Caco-2 (cell line): ENCODE measurements at regions of chr17 and their contacts with region 1.

Region 1: DNA sequence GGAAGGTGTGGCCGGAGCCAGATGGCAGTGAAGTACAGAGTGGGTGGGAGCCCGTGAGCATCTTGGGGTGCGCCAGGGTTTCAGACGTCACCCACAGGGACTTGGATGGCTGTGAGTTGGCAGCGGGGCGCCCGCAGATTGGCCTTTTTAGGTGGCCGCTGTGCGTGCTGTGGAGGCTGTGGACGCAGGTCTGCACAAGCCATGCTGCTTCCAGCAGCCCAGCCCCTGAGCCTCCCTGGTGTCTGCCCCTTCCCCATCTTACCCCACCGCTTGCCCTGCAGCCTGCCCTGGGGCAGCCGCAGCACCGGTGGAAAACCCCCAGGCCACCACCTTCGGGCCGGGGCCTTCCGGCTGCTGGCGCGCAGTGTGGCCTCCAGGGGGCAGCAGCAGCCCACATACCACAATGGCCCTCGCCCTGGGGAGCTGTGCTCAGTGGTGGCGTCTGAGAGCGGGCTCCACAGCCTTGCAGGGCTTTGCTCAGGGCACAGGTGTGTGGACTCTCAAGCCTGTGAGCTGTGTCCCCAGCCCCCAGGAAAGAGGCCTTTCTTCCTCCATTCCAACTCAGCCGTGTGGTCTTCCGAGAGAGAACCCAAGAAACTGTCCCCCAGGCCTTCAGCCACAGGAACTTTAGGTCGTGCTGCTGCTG is 11.8 kb downstream of the ENDOV start:
- DNase-seq: peak; percentile 80 to 91
- H3K4me3 ChIP-seq: no peak overlapping the region
- H3K4me3 Mint-ChIP-seq: no peak overlapping the region
- H3K27ac Mint-ChIP-seq: no peak overlapping the region
- H3K4me1 ChIP-seq: no peaks in the 10 kb centered on the region
- H3K4me1 Mint-ChIP-seq: no peaks in the 10 kb centered on the region
- H3K27me3 ChIP-seq: no peaks in the 10 kb centered on the region
- H3K27me3 Mint-ChIP-seq: peaks cover 6% of the 10 kb centered on the region
- CTCF ChIP-seq: peak; percentile 97 to 99

Region 2: GRCh38 chr17:80575057-80575875 is 148.5 kb after region 1 on chr17:
- CTCF ChIA-PET with region 1: interaction called, 5 read pairs
- POLR2A ChIA-PET with region 1: no interaction called
- intact Hi-C with region 1: loop called (anchors 1 kb)
- DNase-seq: peak; percentile 85 to 92
- H3K4me3 ChIP-seq: no peak overlapping the region
- H3K4me3 Mint-ChIP-seq: no peak overlapping the region
- H3K27ac Mint-ChIP-seq: no peak overlapping the region
- H3K4me1 ChIP-seq: no peaks in the 10 kb centered on the region
- H3K4me1 Mint-ChIP-seq: peaks cover 15% of the 10 kb centered on the region
- H3K27me3 ChIP-seq: no peaks in the 10 kb centered on the region
- H3K27me3 Mint-ChIP-seq: no peaks in the 10 kb centered on the region
- CTCF ChIP-seq: peak; percentile 99 to 100

Region 3: DNA sequence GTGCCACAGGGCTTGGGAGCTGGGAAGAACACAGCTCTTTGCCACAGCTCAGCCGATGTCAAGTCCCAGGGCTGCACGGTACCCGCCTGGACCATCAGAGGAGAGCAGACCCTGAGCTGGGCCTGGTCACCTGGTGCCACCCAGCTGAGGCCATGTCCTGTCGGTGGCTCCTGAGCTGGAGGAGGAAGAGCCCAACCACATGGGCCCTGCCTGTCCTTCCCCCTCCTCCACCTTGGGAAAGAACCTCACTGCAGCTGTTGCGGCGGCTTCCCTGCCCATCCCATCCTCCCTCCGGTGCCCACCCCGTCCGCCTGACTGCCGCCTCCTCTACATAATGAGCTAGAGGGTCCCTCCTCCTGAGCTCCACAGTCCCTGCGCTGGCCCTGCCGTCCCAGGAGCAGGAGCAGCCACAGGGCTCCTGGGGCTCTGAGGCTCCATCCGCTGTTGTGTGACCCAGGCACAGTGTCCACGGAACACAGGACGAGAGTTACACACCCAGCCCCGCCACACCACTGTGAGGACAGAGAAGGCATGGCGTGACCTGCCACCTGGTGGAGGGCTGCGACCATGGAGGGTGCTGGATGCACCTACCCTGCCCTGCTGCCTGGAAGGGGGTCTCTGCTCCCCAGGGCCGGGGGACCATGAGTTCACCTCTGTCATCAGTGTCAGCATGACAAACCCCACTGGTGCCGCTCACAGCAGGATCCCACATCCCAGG is 543.4 kb after region 1 on chr17:
- CTCF ChIA-PET with region 1: interaction called, 11 read pairs
- POLR2A ChIA-PET with region 1: no interaction called
- intact Hi-C with region 1: no loop called
- DNase-seq: peak; percentile 63 to 64
- H3K4me3 ChIP-seq: no peak overlapping the region
- H3K4me3 Mint-ChIP-seq: no peak overlapping the region
- H3K27ac Mint-ChIP-seq: no peak overlapping the region
- H3K4me1 ChIP-seq: no peaks in the 10 kb centered on the region
- H3K4me1 Mint-ChIP-seq: no peaks in the 10 kb centered on the region
- H3K27me3 ChIP-seq: no peaks in the 10 kb centered on the region
- H3K27me3 Mint-ChIP-seq: no peaks in the 10 kb centered on the region
- CTCF ChIP-seq: peak; percentile 29 to 59

Region 4: GRCh38 chr17:80981062-80981902 is 554.5 kb after region 1 on chr17:
- CTCF ChIA-PET with region 1: interaction called, 3 read pairs
- POLR2A ChIA-PET with region 1: no interaction called
- intact Hi-C with region 1: loop called (anchors 2 kb)
- DNase-seq: peak in 1 of 2 experiments; percentile 66
- H3K4me3 ChIP-seq: peak overlapping the region; percentile 17
- H3K4me3 Mint-ChIP-seq: peak overlapping the region; percentile 57
- H3K27ac Mint-ChIP-seq: no peak overlapping the region
- H3K4me1 ChIP-seq: peaks cover 9% of the 10 kb centered on the region; the same call in 1 of the 2 replicates
- H3K4me1 Mint-ChIP-seq: peaks cover 11% of the 10 kb centered on the region
- H3K27me3 ChIP-seq: no peaks in the 10 kb centered on the region
- H3K27me3 Mint-ChIP-seq: peaks cover 7% of the 10 kb centered on the region
- CTCF ChIP-seq: peak; percentile 48 to 98